H1 (cell line): ENCODE measurements at regions of chr3 and their contacts with region 1.

Region 1: GRCh38 chr3:135905058-135905724 is 60.3 kb upstream of the PPP2R3A start:
- DNase-seq: no peak
- H3K4me3 ChIP-seq: no peak overlapping the region
- H3K27ac ChIP-seq: no peak overlapping the region
- H3K4me1 ChIP-seq: no peaks in the 10 kb centered on the region; a peak in 1 of 7 replicates
- H3K27me3 ChIP-seq: no peaks in the 10 kb centered on the region
- CTCF ChIP-seq: peak in 2 of 3 experiments; percentile 41 to 47; a peak in 2 of 4 replicates
- EP300 ChIP-seq: no peak
- POLR2A ChIP-seq: no peak
- RAD21 ChIP-seq: peak; percentile 77 to 79

Region 2: GRCh38 chr3:135927135-135927534 is 21.9 kb after region 1 on chr3:
- CTCF ChIA-PET with region 1: interaction called, 12 read pairs
- POLR2A ChIA-PET with region 1: no interaction called
- DNase-seq: no peak
- H3K4me3 ChIP-seq: no peak overlapping the region
- H3K27ac ChIP-seq: no peak overlapping the region
- H3K4me1 ChIP-seq: peaks cover 0 to 2% (median 0%) of the 10 kb centered on the region in 4 experiments; a peak in 1 of 7 replicates
- H3K27me3 ChIP-seq: no peaks in the 10 kb centered on the region
- CTCF ChIP-seq: no peak
- EP300 ChIP-seq: no peak
- POLR2A ChIP-seq: no peak
- RAD21 ChIP-seq: no peak